Natural killer cell (primary cell): ENCODE measurements at regions of chr1 and their contacts with region 1.

Region 1: GRCh38 chr1:109041621-109042468 is at the start of gene WDR47:
- DNase-seq: peak; percentile 95 to 98
- ATAC-seq: peak; percentile 96 to 99 (median 97)
- H3K4me3 ChIP-seq: peak within 1 kb of the TSS; percentile 90
- H3K4me3 Mint-ChIP-seq: peak within 1 kb of the TSS; percentile 91
- H3K27ac ChIP-seq: peak within 1 kb of the TSS; percentile 82
- H3K27ac Mint-ChIP-seq: peak within 1 kb of the TSS; percentile 79 to 90
- H3K4me1 ChIP-seq: peaks cover 13% of the 10 kb centered on the region
- H3K4me1 Mint-ChIP-seq: peaks cover 14% of the 10 kb centered on the region in 2 donors
- H3K27me3 ChIP-seq: no peaks in the 10 kb centered on the region
- H3K27me3 Mint-ChIP-seq: no peaks in the 10 kb centered on the region
- CTCF ChIP-seq: no peak
- total RNA-seq, gene WDR47: 15.7 to 21.3 (median 17.2) TPM

Region 2: DNA sequence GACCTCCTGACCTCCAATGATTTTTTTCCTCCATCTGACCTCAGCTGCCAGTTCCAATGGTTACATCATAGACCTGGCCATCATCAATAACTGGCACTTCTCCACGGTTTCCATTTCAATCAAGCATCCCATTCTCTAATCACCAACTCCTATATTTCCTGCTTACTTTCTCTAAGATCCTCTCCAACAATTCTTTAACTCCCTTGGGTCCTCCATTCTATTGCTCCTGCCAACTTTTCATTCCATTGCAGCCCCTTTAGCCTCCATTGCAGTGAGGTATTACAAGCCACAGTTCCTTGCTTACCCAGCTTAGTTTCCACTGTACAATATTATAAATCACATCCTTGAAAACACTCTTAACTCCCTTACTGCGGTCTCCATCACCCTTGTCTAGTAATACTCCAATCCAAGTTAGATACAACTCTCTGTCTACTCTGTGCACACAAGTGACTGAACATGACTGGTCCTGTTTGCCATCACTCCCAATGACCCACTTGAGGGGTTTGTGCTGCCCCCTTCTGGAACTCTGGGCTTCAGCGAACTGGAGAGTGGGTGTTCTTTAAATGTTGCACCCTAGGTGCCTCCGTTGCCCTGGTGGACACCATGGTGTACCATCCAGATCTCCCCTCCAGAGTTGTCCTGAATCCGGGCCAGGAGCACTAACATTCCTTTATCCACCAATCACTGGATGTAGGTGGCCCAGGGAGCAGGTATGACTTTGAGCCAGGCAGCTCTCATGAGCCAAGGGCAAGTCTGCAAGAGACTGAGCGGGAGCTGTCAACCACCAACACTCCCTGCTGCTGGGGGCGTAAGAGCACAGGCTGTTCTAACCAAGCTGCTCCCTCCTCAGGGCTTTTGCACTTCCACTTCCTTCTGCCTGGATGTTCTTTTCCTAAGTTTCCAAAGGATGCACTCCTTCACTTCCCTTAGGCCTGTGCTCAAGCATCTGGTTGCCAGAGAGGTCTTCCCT is 332.9 kb before region 1 on chr1:
- intact Hi-C with region 1: no loop called
- DNase-seq: peak; percentile 48 to 81
- ATAC-seq: peak; percentile 72 to 90 (median 87)
- H3K4me3 ChIP-seq: no peak overlapping the region
- H3K4me3 Mint-ChIP-seq: no peak overlapping the region
- H3K27ac ChIP-seq: no peak overlapping the region
- H3K27ac Mint-ChIP-seq: peak overlapping the region in 1 of 2 donors; percentile 35
- H3K4me1 ChIP-seq: peaks cover 11% of the 10 kb centered on the region
- H3K4me1 Mint-ChIP-seq: peaks cover 17 to 25% of the 10 kb centered on the region in 2 donors
- H3K27me3 ChIP-seq: no peaks in the 10 kb centered on the region
- H3K27me3 Mint-ChIP-seq: no peaks in the 10 kb centered on the region
- CTCF ChIP-seq: peak; percentile 53

Region 3: DNA sequence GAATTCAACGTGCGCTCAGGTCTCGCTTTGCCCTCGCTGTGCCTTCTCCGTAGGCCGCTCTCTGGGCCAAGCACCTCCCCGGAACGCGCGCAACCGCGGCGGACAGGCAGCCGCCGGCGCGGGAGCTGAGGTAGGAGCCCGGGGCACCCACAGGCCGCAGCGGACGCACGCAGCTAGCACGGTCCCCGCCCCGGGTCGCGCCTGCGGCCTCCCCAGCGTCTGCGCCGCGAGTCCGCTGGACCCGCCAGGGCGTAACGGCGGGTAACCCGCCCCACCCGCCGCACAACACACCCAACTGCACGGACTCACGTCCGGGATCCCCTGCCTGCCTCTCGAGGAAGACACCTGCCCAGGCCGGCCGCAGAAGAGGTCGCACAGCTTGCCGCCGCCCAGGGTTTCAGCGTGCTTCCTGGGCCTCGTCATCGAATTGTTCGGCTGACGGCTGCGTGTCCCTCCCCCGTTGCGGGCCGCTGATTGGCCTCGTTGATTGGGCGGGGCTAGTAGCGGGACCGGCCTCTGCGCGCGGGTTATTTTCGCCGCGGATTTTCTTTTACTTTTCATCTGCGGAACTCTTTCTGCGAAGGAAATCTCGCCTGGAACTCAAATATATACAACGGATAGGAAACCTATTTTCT is 78.7 kb before region 1 on chr1 and contains the start of gene CLCC1:
- intact Hi-C with region 1: loop called (anchors 5 kb)
- DNase-seq: peak; percentile 88 to 95
- ATAC-seq: peak; percentile 88 to 95 (median 94)
- H3K4me3 ChIP-seq: peak within 1 kb of the TSS; percentile 52
- H3K4me3 Mint-ChIP-seq: peak within 1 kb of the TSS; percentile 93
- H3K27ac ChIP-seq: peak within 1 kb of the TSS; percentile 82
- H3K27ac Mint-ChIP-seq: peak within 1 kb of the TSS; percentile 89 to 90
- H3K4me1 ChIP-seq: peaks cover 18% of the 10 kb centered on the region
- H3K4me1 Mint-ChIP-seq: peaks cover 20 to 24% of the 10 kb centered on the region in 2 donors
- H3K27me3 ChIP-seq: peaks cover 3% of the 10 kb centered on the region
- H3K27me3 Mint-ChIP-seq: peaks cover 0 to 10% of the 10 kb centered on the region in 2 donors
- CTCF ChIP-seq: no peak
- total RNA-seq, gene CLCC1: 12.8 to 25.8 (median 17.1) TPM

Region 4: DNA sequence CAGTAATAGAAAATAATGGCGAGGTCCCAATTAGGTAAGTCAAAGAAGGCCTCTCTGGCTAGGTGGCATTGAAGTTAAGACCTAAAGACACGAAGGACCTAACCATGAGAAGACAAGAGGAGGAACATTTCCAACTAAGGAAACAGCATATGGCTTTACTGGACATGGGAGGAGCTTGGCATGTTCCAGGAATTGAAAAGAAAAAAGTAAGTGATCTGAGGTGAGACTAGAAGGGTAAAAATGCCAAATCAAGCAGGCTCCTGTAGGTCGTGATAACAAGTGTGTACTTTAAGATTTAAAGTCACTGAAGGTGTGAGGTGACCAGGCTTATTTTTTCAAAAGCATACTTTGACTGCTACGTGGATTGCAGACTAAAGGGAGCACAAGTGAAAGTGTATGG is 65.2 kb before region 1 on chr1:
- intact Hi-C with region 1: no loop called
- DNase-seq: no peak
- ATAC-seq: no peak
- H3K4me3 ChIP-seq: no peak overlapping the region
- H3K4me3 Mint-ChIP-seq: no peak overlapping the region
- H3K27ac ChIP-seq: no peak overlapping the region
- H3K27ac Mint-ChIP-seq: no peak overlapping the region
- H3K4me1 ChIP-seq: no peaks in the 10 kb centered on the region
- H3K4me1 Mint-ChIP-seq: no peaks in the 10 kb centered on the region
- H3K27me3 ChIP-seq: no peaks in the 10 kb centered on the region
- H3K27me3 Mint-ChIP-seq: no peaks in the 10 kb centered on the region
- CTCF ChIP-seq: no peak

Region 5: DNA sequence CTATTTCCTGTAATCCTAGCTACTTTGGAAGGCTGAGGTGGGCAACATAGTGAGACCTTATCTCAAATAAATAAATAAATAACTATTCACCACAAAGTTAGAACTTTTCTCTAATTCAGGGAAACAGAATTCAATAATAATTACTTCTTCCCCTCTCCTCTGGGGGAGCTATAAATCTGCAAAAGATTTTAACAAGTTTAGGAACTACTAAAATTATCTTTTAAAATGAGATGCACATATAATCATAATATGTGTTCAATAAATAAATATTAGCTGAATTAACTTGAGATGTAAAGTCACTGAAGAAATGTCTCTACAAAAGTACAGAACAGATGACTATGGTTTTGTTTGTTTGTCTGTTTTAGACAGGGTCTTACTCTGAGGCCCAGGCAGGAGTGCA is 14.0 kb before region 1 on chr1:
- intact Hi-C with region 1: no loop called
- DNase-seq: peak in 1 of 2 donors; percentile 11
- ATAC-seq: no peak
- H3K4me3 ChIP-seq: no peak overlapping the region
- H3K4me3 Mint-ChIP-seq: no peak overlapping the region
- H3K27ac ChIP-seq: no peak overlapping the region
- H3K27ac Mint-ChIP-seq: no peak overlapping the region
- H3K4me1 ChIP-seq: no peaks in the 10 kb centered on the region
- H3K4me1 Mint-ChIP-seq: no peaks in the 10 kb centered on the region
- H3K27me3 ChIP-seq: no peaks in the 10 kb centered on the region
- H3K27me3 Mint-ChIP-seq: no peaks in the 10 kb centered on the region
- CTCF ChIP-seq: peak; percentile 30

Region 6: DNA sequence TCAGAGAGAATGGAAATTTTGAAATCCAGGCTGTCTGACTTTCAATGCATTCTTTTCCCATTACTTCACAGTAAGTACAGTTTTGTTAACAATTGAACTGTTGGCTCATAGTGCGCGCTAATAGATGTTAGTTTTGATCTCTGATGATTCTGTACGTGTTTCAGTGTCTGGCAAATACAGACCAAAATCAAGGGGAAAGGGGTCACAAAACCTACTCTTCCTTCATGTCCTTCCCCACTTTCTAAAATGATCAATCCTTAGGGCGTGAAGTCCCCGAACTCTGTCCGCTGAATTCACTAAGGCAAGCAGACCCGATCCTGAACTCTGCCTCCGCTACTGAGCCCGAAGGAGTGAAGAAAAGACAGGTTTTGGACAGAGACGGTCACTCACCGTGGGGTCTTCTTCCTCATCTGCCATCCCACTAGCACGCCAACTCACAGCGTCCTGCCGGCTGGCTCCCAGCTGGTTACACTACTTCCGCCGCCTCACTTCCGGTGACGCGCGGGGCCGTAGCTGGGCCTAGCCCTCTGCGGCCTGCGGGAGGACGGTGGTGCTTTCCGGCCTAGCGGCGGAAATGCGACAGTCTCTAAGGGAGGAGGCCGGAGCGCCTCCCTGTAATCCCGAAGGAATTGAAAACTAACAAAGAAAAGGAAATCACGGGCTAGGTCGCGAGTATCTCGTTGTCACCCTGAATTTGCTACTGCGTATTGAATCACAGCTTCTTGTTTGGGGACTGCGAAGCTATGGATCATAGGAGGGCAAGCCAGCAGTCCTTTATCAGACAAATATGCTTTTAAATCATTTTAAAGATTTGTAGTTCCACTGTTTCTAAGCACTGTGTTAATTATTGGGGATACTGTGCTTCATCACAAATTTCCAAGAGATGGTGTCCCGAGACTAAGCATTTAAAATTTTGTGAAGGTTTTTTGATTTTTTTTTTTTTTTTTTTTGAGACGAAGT is 34.0 kb after region 1 on chr1 and contains the start of gene TAF13:
- intact Hi-C with region 1: loop called (anchors 1 kb)
- DNase-seq: peak; percentile 87 to 93
- ATAC-seq: peak; percentile 98 to 99 (median 99)
- H3K4me3 ChIP-seq: peak within 1 kb of the TSS; percentile 88
- H3K4me3 Mint-ChIP-seq: peak within 1 kb of the TSS; percentile 98
- H3K27ac ChIP-seq: peak within 1 kb of the TSS; percentile 90
- H3K27ac Mint-ChIP-seq: peak within 1 kb of the TSS; percentile 99
- H3K4me1 ChIP-seq: peaks cover 8% of the 10 kb centered on the region
- H3K4me1 Mint-ChIP-seq: peaks cover 21% of the 10 kb centered on the region in 2 donors
- H3K27me3 ChIP-seq: no peaks in the 10 kb centered on the region
- H3K27me3 Mint-ChIP-seq: peaks cover 3 to 6% of the 10 kb centered on the region in 2 donors
- CTCF ChIP-seq: no peak
- total RNA-seq, gene TAF13: 44.4 to 54.5 (median 47.2) TPM

Region 7: DNA sequence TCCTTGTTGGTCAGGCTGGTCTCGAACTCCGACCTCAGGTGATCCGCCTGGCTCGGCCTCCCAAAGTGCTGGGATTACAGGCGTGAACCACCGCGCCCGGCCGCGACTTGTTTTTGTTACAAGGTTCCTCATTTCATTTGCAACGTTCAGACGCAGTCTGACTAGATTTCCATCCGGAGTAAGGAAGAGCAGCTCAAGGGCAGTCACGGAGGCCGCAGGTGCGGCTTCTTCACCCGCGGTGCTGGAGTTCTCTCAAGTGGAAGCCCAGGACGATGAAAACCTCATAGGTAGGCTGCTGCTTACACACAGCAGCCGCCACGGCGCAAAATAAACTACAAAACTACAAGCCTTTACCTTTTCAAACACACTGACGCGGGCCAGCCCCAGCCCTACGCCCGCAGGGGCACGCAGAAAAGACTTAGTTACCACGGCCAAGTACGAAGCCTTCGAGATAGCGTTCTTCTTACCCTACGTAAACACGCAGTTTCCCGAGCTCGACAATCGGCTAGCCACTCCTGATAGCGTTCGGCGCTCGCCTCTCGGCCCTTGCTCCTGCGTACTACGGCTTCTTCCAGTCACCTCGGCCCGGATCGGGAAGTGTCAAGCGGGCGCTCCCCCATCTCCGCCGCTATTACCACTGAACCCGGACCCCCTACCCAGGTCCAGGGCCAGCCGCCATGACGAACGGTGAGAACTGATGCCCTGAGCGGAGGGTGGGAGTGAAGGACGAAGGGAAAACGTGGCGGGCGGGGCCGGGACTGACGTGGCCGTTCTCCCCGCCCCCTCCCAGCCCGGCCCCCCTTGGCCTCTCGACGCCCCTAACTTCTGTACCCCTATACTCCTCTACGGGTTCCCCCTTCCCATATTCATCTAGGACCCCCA is 48.6 kb after region 1 on chr1 and contains the start of gene TMEM167B:
- intact Hi-C with region 1: loop called (anchors 5 kb)
- DNase-seq: peak; percentile 81 to 93
- ATAC-seq: peak; percentile 93 to 98 (median 94)
- H3K4me3 ChIP-seq: peak within 1 kb of the TSS; percentile 91
- H3K4me3 Mint-ChIP-seq: peak within 1 kb of the TSS; percentile 93
- H3K27ac ChIP-seq: peak within 1 kb of the TSS; percentile 97
- H3K27ac Mint-ChIP-seq: peak within 1 kb of the TSS; percentile 94 to 96
- H3K4me1 ChIP-seq: peaks cover 20% of the 10 kb centered on the region
- H3K4me1 Mint-ChIP-seq: peaks cover 28% of the 10 kb centered on the region in 2 donors
- H3K27me3 ChIP-seq: no peaks in the 10 kb centered on the region
- H3K27me3 Mint-ChIP-seq: no peaks in the 10 kb centered on the region
- CTCF ChIP-seq: no peak
- total RNA-seq, gene TMEM167B: 61.2 to 73.0 (median 71.8) TPM

Region 8: GRCh38 chr1:109099938-109100773 is 58.3 kb after region 1 on chr1:
- intact Hi-C with region 1: loop called (anchors 2 kb)
- DNase-seq: peak; percentile 91 to 98
- ATAC-seq: peak; percentile 93 to 98 (median 94)
- H3K4me3 ChIP-seq: peak overlapping the region; percentile 95
- H3K4me3 Mint-ChIP-seq: peak overlapping the region; percentile 98
- H3K27ac ChIP-seq: peak overlapping the region; percentile 94
- H3K27ac Mint-ChIP-seq: peak overlapping the region; percentile 93 to 97
- H3K4me1 ChIP-seq: peaks cover 19% of the 10 kb centered on the region
- H3K4me1 Mint-ChIP-seq: peaks cover 13 to 20% of the 10 kb centered on the region in 2 donors
- H3K27me3 ChIP-seq: no peaks in the 10 kb centered on the region
- H3K27me3 Mint-ChIP-seq: no peaks in the 10 kb centered on the region
- CTCF ChIP-seq: peak; percentile 72